CD8-positive, alpha-beta memory T cell (primary cell): ENCODE measurements at regions of chr1 and their contacts with region 1.

Region 1: GRCh38 chr1:26391450-26391849 is 18.9 kb upstream of the ZNF683 start:
- DNase-seq: peak in 4 of 5 donors; percentile 24 to 73 (median 46)
- H3K4me3 ChIP-seq: no peak overlapping the region
- H3K4me3 Mint-ChIP-seq: peak overlapping the region in 3 of 7 donors; percentile 0 to 22 (median 18)
- H3K27ac ChIP-seq: no peak overlapping the region
- H3K27ac Mint-ChIP-seq: peak overlapping the region in 4 of 8 donors; percentile 1 to 15 (median 4)
- H3K4me1 ChIP-seq: peaks cover 10% of the 10 kb centered on the region
- H3K4me1 Mint-ChIP-seq: peaks cover 32 to 45% (median 35%) of the 10 kb centered on the region in 3 donors
- H3K27me3 ChIP-seq: no peaks in the 10 kb centered on the region
- H3K27me3 Mint-ChIP-seq: peaks cover 0 to 9% of the 10 kb centered on the region in 2 donors

Region 2: DNA sequence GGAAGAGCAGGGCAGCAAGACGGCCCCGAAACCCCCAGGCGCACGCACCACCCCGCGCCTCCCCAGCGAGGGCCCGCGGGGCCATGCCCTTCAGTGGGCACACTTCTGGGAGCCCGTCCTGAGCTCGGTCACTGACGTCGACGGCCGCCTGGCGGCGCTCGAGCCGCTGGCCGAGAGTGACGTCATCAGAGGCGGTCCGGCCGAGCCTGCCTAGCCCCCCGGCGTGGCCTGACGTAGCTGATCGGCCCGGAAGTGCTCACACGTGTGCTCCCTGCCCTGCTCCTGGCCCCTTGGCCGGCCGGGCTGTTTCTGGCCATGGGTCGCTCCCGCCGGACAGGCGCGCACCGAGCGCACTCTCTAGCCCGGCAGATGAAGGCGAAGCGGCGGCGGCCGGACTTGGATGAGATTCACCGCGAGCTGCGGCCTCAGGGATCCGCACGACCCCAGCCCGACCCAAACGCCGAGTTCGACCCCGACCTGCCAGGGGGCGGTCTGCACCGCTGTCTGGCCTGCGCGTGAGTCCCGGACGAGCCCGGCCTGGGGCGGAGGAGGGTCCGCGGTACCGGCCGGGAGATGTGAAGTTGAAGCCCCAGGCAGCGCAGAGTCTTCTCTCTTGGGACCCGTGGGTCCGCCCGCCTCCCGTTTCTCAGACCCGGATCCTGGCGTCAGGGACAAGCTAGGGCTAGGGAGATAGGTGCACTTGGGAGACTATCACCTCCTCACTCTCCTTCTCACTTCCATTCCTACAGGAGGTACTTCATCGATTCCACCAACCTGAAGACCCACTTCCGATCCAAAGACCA is 221.6 kb before region 1 on chr1 and contains the start of gene ZNF593:
- CTCF ChIA-PET with region 1: interaction called, 17 read pairs
- POLR2A ChIA-PET with region 1: interaction called, 3 read pairs
- DNase-seq: peak; percentile 71 to 88 (median 81)
- H3K4me3 ChIP-seq: peak within 1 kb of the TSS; percentile 68
- H3K4me3 Mint-ChIP-seq: peak within 1 kb of the TSS; percentile 86 to 95 (median 88)
- H3K27ac ChIP-seq: peak within 1 kb of the TSS; percentile 86
- H3K27ac Mint-ChIP-seq: peak within 1 kb of the TSS; percentile 39 to 97 (median 85)
- H3K4me1 ChIP-seq: peaks cover 17% of the 10 kb centered on the region
- H3K4me1 Mint-ChIP-seq: peaks cover 12 to 25% (median 22%) of the 10 kb centered on the region in 3 donors
- H3K27me3 ChIP-seq: no peaks in the 10 kb centered on the region
- H3K27me3 Mint-ChIP-seq: peaks cover 0 to 2% of the 10 kb centered on the region in 2 donors
- total RNA-seq, gene ZNF593: 86.4 to 87.9 TPM

Region 3: DNA sequence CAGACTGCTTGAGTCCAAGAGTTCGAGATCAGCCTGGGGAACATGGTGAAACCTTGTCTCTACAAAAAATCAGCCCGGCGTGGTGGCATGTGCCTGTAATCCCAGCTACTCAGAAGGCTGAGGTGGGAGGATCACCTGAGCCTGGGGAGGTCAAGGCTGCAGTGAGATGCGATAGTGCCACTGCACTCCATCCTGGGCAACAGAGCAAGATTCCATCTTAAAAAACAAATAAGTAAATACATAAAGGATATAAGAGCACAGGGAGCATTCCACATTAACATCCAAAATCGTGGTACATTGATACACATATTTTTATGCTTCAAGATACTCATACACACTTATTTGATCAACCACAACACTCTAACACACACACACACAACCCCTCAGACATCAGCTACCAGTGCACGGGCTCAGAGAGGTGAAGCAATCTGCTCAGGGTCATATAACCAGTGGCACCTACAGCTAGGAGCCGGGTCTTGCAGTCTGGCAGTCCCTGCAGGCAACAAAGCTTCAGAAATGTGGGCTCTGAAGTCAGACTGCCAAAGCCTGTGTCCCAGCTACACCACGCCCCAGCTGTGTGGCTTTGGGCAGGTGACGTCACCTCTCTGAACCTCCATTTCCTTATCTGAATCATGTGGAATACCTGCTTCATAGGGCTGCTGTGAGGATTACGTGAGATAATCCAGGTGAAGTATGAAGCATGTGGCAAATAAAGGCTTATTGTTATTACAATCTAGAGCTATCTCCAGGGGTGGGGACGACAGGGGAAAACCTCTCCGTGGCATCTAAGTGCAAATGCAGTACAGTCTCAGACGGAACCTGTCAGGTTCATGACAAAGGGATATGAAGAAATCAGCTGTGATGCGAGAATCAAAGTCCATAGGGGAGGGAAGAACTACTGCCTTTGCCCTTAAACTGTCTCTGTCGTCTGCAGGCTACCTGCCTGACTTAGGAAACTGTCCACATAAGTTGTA is 32.8 kb before region 1 on chr1:
- CTCF ChIA-PET with region 1: interaction called, 50 read pairs
- POLR2A ChIA-PET with region 1: no interaction called
- DNase-seq: peak; percentile 61 to 87 (median 75)
- H3K4me3 ChIP-seq: peak overlapping the region; percentile 23
- H3K4me3 Mint-ChIP-seq: peak overlapping the region; percentile 60 to 84 (median 69)
- H3K27ac ChIP-seq: no peak overlapping the region
- H3K27ac Mint-ChIP-seq: peak overlapping the region; percentile 61 to 91 (median 78)
- H3K4me1 ChIP-seq: peaks cover 36% of the 10 kb centered on the region
- H3K4me1 Mint-ChIP-seq: peaks cover 44 to 60% (median 47%) of the 10 kb centered on the region in 3 donors
- H3K27me3 ChIP-seq: peaks cover 14% of the 10 kb centered on the region
- H3K27me3 Mint-ChIP-seq: peaks cover 11 to 21% of the 10 kb centered on the region in 2 donors

Region 4: GRCh38 chr1:26363549-26364448 is 27.7 kb before region 1 on chr1:
- CTCF ChIA-PET with region 1: interaction called, 50 read pairs
- POLR2A ChIA-PET with region 1: no interaction called
- DNase-seq: peak; percentile 75 to 87 (median 78)
- H3K4me3 ChIP-seq: no peak overlapping the region
- H3K4me3 Mint-ChIP-seq: peak overlapping the region in 5 of 7 donors; percentile 4 to 72 (median 61)
- H3K27ac ChIP-seq: no peak overlapping the region
- H3K27ac Mint-ChIP-seq: peak overlapping the region in 5 of 8 donors; percentile 18 to 59 (median 32)
- H3K4me1 ChIP-seq: peaks cover 46% of the 10 kb centered on the region
- H3K4me1 Mint-ChIP-seq: peaks cover 60 to 84% (median 66%) of the 10 kb centered on the region in 3 donors
- H3K27me3 ChIP-seq: peaks cover 14% of the 10 kb centered on the region
- H3K27me3 Mint-ChIP-seq: peaks cover 11 to 25% of the 10 kb centered on the region in 2 donors

Region 5: GRCh38 chr1:26378088-26378878 is 13.2 kb before region 1 on chr1:
- CTCF ChIA-PET with region 1: interaction called, 54 read pairs
- POLR2A ChIA-PET with region 1: interaction called, 8 read pairs
- DNase-seq: peak; percentile 79 to 95 (median 81)
- H3K4me3 ChIP-seq: peak overlapping the region; percentile 47
- H3K4me3 Mint-ChIP-seq: peak overlapping the region; percentile 46 to 85 (median 75)
- H3K27ac ChIP-seq: peak overlapping the region; percentile 75
- H3K27ac Mint-ChIP-seq: peak overlapping the region; percentile 80 to 97 (median 94)
- H3K4me1 ChIP-seq: peaks cover 70% of the 10 kb centered on the region
- H3K4me1 Mint-ChIP-seq: peaks cover 67 to 79% (median 71%) of the 10 kb centered on the region in 3 donors
- H3K27me3 ChIP-seq: no peaks in the 10 kb centered on the region
- H3K27me3 Mint-ChIP-seq: peaks cover 0 to 3% of the 10 kb centered on the region in 2 donors